ENCODE measurements at regions of chr20 and their contacts with region 1.

Region 1: DNA sequence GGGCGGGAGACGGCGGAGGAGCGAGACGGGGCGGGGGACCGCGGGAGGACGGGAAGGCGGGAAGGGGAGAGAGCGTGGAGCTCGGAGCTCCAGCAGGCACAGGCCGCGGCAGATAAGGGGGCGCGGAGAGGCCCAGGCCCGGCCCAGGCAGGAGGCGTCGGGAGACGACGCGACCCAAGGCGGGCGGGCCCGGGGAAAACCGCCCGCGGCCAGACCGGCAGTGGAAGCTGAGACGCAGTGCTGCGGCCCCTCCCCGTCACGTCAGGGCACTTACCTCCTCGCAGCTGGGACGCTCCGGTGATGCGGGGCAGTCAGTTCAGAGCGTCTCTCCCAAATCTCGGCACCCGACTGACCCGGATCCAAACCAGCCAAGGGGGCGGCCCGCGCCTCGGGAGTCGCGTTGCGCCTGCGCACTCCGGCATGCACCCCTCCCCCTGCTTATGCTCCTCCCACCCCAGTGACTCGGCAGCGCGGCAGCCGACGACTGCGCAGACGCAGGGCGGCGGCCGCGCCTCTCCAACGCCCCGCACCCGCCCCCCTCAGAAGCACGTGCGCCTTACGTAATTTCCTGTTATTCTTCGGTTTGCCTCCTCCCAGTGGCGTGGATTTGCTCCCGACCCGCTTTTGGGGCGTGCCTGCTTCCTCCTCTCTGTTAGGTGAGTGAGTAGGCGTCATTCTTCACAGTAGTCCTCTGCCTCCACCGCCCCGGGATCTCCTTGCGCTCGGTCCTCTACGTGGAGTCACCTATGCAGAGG is at the start of gene OSER1:
- DNase-seq: peak; percentile 97 to 99 (median 98)
- ATAC-seq: peak; percentile 83
- H3K4me3 ChIP-seq: peak within 1 kb of the TSS; percentile 78 to 91
- H3K4me3 Mint-ChIP-seq: peak within 1 kb of the TSS; percentile 96
- H3K27ac ChIP-seq: peak within 1 kb of the TSS; percentile 93 to 96
- H3K27ac Mint-ChIP-seq: peak within 1 kb of the TSS; percentile 99
- H3K4me1 ChIP-seq: peaks cover 43% of the 10 kb centered on the region
- H3K4me1 Mint-ChIP-seq: peaks cover 73% of the 10 kb centered on the region
- H3K27me3 ChIP-seq: no peaks in the 10 kb centered on the region
- H3K27me3 Mint-ChIP-seq: no peaks in the 10 kb centered on the region
- CTCF ChIP-seq: no peak
- total RNA-seq, gene OSER1: 201 to 204 TPM

Region 2: DNA sequence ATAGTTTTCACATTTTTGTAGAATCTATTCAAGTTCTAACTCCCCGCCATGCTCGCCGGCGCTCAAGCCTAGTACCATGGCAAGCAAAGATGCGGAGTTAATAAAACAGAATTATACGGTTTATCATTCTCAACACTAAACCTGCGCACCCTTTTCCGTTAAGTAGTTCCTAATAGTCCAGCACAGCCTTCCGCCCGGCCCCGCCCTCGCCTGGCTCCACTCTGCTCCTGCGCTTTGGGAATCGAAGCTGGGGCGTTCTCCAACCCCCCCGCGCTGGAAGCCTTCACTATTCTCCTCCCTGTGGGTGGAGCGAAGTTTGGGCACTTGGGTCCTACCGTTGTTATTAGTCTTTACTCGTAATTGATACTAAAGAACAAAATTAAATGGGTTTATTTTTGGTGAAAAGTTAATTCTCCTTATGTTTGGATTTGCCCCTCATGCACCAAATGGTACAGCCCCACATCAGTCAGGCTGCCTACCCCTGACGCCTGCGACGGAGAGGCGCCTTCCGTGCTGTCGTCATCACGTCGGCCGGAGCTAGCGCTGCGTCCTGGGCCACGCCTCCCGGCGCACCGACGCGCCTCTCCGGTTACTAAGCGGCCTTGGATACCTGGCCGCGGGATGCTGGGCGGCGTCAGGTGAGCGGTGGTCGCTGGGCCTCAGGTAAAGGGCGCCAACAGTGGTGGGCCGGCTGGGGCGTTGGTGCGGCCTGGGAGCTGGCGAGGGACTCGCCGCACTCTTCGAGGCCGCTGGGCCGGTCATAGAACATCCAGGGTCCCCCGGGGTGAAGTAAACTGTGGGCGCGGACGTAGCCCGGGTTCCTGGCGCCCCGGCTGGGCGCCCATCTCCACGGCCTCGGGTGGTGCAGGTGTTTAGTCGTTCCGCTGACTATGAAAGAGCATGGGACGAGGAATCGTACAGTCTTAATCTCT is 619.9 kb before region 1 on chr20 and contains the start of gene IFT52:
- CTCF ChIA-PET with region 1: no interaction called
- POLR2A ChIA-PET with region 1: no interaction called
- intact Hi-C with region 1: loop called in 1 of 2 experiments (anchors 2 kb)
- DNase-seq: peak; percentile 79 to 96 (median 89)
- ATAC-seq: peak; percentile 98
- H3K4me3 ChIP-seq: peak within 1 kb of the TSS; percentile 62 to 88
- H3K4me3 Mint-ChIP-seq: peak within 1 kb of the TSS; percentile 91
- H3K27ac ChIP-seq: peak within 1 kb of the TSS; percentile 74 to 96
- H3K27ac Mint-ChIP-seq: peak within 1 kb of the TSS; percentile 96
- H3K4me1 ChIP-seq: peaks cover 13% of the 10 kb centered on the region
- H3K4me1 Mint-ChIP-seq: peaks cover 20% of the 10 kb centered on the region
- H3K27me3 ChIP-seq: no peaks in the 10 kb centered on the region
- H3K27me3 Mint-ChIP-seq: peaks cover 3% of the 10 kb centered on the region
- CTCF ChIP-seq: no peak
- total RNA-seq, gene IFT52: 11.5 to 14.1 TPM

Region 3: DNA sequence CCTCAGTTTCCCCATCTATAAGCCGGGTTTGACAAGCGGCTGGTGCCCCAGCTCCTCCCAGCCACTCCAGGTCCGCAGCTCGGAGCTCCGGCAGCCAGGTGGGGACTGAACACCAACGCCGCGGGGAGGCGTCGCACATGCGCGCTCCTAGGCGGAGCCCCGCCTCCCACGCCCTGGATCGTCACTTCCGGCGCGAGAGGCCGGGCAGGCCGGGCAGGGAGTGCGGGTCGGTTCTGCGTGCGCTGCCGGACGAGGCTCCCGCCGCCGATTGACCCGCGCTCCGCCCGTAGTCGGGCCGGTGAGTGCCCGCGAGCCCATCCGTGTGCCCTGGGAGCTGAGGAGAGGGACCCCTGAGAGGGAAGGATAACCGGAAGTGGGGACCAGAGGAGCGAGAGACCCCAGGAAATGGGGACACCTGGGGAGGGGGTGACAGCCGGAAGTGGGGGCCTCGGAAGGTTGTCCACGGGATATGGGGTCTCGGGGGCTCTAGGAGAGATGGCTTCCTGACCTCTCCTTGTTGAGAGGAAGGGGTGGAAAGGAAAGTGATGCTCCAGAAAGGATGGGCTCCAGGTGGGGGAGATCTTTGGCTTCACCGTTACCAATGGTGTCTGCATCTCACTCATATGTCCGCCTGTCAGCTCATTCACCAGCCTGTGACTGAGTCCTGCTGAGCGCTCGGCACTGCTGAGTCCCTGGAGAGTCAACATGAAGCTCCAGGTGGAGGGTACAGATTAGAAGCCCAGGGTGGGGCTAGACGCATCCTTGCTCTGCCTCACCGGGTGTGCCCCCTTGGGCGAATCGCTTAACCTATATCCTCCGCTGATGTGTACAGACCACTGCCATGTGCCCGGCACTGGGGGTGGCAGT is 265.3 kb after region 1 on chr20 and contains the start of gene TTPAL:
- CTCF ChIA-PET with region 1: no interaction called
- POLR2A ChIA-PET with region 1: no interaction called
- intact Hi-C with region 1: loop called (anchors 1 to 2 kb)
- DNase-seq: peak; percentile 72 to 95 (median 88)
- ATAC-seq: peak; percentile 96
- H3K4me3 ChIP-seq: peak within 1 kb of the TSS; percentile 82 to 90
- H3K4me3 Mint-ChIP-seq: peak within 1 kb of the TSS; percentile 86
- H3K27ac ChIP-seq: peak within 1 kb of the TSS; percentile 94 to 96
- H3K27ac Mint-ChIP-seq: peak within 1 kb of the TSS; percentile 95
- H3K4me1 ChIP-seq: peaks cover 16% of the 10 kb centered on the region
- H3K4me1 Mint-ChIP-seq: peaks cover 27% of the 10 kb centered on the region
- H3K27me3 ChIP-seq: no peaks in the 10 kb centered on the region
- H3K27me3 Mint-ChIP-seq: no peaks in the 10 kb centered on the region
- CTCF ChIP-seq: peak; percentile 26
- total RNA-seq, gene TTPAL: 12.3 TPM

Region 4: GRCh38 chr20:44642203-44643153 is 431.9 kb after region 1 on chr20:
- CTCF ChIA-PET with region 1: no interaction called
- POLR2A ChIA-PET with region 1: no interaction called
- intact Hi-C with region 1: loop called in 1 of 2 experiments (anchors 10 kb)
- DNase-seq: peak in 7 of 9 experiments; percentile 20 to 74 (median 45)
- ATAC-seq: peak; percentile 27
- H3K4me3 ChIP-seq: peak overlapping the region; percentile 14 to 32
- H3K4me3 Mint-ChIP-seq: peak overlapping the region; percentile 51
- H3K27ac ChIP-seq: peak overlapping the region; percentile 51 to 93
- H3K27ac Mint-ChIP-seq: peak overlapping the region; percentile 93
- H3K4me1 ChIP-seq: peaks cover 65% of the 10 kb centered on the region
- H3K4me1 Mint-ChIP-seq: peaks cover 69% of the 10 kb centered on the region
- H3K27me3 ChIP-seq: no peaks in the 10 kb centered on the region
- H3K27me3 Mint-ChIP-seq: no peaks in the 10 kb centered on the region
- CTCF ChIP-seq: peak; percentile 44

Region 5: DNA sequence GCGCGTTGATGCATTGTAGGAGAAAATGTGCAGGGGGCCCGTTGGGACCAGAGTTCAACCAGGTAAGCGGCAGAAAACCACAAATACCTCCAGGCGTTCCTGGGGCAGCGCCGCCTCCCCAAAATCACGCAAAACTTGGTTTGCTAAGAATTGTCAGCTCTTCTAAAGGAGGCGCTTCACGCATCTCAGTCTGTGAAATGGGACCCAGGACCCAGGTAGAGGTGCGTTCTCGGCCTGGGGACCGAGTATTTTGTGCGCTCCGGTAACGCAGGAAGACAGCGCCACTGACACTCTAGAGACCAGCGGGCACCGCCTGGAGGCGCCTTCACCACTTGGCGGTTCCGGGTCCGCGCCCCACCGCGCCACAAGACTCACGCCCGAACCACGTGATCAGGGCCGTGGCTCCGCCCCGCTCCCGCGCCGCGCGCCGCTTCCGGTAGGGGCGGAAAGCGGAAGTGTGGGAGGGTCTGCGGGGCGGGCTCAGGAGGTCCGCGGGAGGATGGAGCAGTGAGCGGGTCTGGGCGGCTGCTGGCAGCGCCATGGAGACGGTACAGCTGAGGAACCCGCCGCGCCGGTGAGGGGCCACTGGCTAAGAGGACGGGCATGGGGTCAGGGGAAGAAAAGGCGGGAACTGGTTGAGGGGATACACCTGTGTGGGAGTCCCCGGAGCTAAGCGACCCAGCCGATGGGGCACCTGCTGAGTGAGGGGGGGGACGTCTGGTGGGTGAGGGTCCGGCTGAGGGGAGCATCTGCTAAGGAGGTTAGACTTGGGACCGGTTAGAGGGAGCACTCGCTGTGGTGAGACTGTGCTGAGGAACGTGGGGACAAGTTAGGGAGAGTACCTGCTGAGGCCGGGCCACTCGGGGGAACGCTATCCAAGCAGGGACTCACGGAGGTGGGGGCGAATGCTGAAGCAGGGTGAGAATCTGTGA is 755.7 kb after region 1 on chr20 and contains the start of gene STK4:
- CTCF ChIA-PET with region 1: no interaction called
- POLR2A ChIA-PET with region 1: no interaction called
- intact Hi-C with region 1: loop called in 1 of 2 experiments (anchors 2 kb)
- DNase-seq: peak; percentile 90 to 99 (median 96)
- ATAC-seq: peak; percentile 76
- H3K4me3 ChIP-seq: peak within 1 kb of the TSS; percentile 96 to 97
- H3K4me3 Mint-ChIP-seq: peak within 1 kb of the TSS; percentile 91
- H3K27ac ChIP-seq: peak within 1 kb of the TSS; percentile 82 to 93
- H3K27ac Mint-ChIP-seq: peak within 1 kb of the TSS; percentile 89
- H3K4me1 ChIP-seq: peaks cover 28% of the 10 kb centered on the region
- H3K4me1 Mint-ChIP-seq: peaks cover 51% of the 10 kb centered on the region
- H3K27me3 ChIP-seq: no peaks in the 10 kb centered on the region
- H3K27me3 Mint-ChIP-seq: no peaks in the 10 kb centered on the region
- CTCF ChIP-seq: no peak
- total RNA-seq, gene STK4: 253 to 259 TPM

Measured in CD8-positive, alpha-beta T cell (primary cell).